ENCODE measurements at regions of chr14 and their contacts with region 1.

Region 1: GRCh38 chr14:96100161-96101029 is 61.2 kb downstream of the C14orf132 start:
- DNase-seq: peak; percentile 66 to 96
- H3K4me3 ChIP-seq: no peak overlapping the region
- H3K27ac ChIP-seq: no peak overlapping the region
- H3K4me1 ChIP-seq: peaks cover 1 to 9% (median 5%) of the 10 kb centered on the region in 4 experiments
- H3K27me3 ChIP-seq: no peaks in the 10 kb centered on the region
- CTCF ChIP-seq: peak; percentile 86 to 100 (median 93)
- EP300 ChIP-seq: no peak; a peak in 1 of 3 replicates
- POLR2A ChIP-seq: no peak
- RAD21 ChIP-seq: peak; percentile 99 to 100

Region 2: DNA sequence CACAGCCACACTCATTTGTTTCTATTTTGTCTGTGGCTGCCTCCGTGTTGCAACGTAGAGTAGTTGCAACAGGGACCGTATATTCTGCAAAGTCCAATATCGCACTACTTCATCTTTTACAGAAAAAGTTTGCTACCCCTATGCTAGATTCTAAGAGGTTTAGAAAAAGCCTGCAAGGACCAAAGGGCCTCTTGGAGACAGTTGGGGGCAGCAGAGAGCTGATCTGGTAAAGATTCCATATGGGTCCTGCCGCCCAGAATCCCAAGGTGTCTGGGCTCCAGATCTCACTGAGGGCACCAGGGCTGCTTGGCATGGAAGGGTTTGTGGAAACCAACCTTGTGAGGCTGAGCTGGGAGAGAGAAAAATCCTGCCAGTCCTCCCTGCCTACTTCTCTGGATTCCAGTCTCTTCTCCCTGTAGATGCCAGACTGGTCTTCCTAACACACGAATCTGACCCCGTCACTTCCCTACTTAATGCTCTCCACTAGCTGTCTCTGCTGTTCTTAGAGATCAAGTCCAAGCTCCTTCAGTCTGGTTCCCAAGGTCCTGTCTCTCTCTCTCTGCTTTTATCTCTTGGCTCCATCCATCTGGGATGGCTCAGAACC is 490.9 kb before region 1 on chr14:
- CTCF ChIA-PET with region 1: interaction called, 10 read pairs
- POLR2A ChIA-PET with region 1: no interaction called
- DNase-seq: peak in 1 of 2 experiments; percentile 80
- H3K4me3 ChIP-seq: no peak overlapping the region
- H3K27ac ChIP-seq: no peak overlapping the region
- H3K4me1 ChIP-seq: no peaks in the 10 kb centered on the region; a peak in 1 of 7 replicates
- H3K27me3 ChIP-seq: peaks cover 0 to 4% (median 0%) of the 10 kb centered on the region in 4 experiments; a peak in 1 of 7 replicates
- CTCF ChIP-seq: peak; percentile 47 to 83 (median 82)
- EP300 ChIP-seq: no peak
- POLR2A ChIP-seq: no peak
- RAD21 ChIP-seq: peak; percentile 87 to 90

Region 3: GRCh38 chr14:96053600-96054381 is 46.6 kb before region 1 on chr14:
- CTCF ChIA-PET with region 1: interaction called, 54 read pairs
- POLR2A ChIA-PET with region 1: no interaction called
- DNase-seq: peak in 1 of 2 experiments; percentile 35
- H3K4me3 ChIP-seq: no peak overlapping the region
- H3K27ac ChIP-seq: no peak overlapping the region
- H3K4me1 ChIP-seq: no peaks in the 10 kb centered on the region; a peak in 2 of 7 replicates
- H3K27me3 ChIP-seq: no peaks in the 10 kb centered on the region
- CTCF ChIP-seq: no peak
- EP300 ChIP-seq: no peak
- POLR2A ChIP-seq: no peak
- RAD21 ChIP-seq: no peak

Region 4: DNA sequence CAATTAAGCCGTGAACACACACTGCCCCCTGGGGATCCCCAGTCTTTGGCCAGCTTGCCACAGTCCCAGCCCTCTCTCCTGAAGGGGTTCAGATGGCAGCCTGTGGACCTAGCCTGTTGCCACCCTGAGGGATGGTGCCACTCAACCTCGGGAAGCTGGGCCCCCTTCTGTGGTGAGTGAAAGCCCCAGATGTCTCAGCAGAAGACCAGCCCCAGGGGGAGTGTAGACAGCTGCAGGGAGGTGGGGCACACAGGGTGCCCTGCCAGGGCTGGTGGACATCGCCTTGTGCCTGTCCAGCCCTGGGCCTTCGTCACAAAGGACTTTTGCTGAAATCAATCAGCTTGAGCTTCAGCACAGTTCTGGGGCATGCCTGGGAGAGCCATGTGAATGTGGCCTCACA is 28.8 kb before region 1 on chr14:
- CTCF ChIA-PET with region 1: interaction called, 15 read pairs
- POLR2A ChIA-PET with region 1: no interaction called
- DNase-seq: no peak
- H3K4me3 ChIP-seq: no peak overlapping the region
- H3K27ac ChIP-seq: no peak overlapping the region
- H3K4me1 ChIP-seq: no peaks in the 10 kb centered on the region; a peak in 1 of 7 replicates
- H3K27me3 ChIP-seq: no peaks in the 10 kb centered on the region
- CTCF ChIP-seq: no peak
- EP300 ChIP-seq: no peak
- POLR2A ChIP-seq: no peak
- RAD21 ChIP-seq: no peak

Region 5: DNA sequence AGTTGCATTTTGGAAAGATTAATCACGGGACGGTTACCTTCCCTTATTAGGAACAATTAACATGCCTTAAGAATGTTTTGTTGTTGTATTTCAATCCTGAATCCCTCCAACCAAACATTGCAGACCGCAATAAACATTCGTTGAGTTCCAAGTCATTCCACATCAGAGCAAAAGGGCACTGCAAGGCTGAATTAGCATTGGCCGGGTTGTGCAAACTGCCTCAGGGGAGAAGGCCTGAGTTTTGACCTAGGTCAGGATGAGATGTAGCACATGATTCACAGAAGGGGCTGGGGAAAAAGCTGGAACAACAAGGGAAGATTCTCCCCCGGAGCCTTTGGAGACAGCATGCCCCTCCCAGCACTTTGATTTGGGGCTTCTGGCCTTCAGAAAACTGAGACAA is 22.1 kb after region 1 on chr14:
- CTCF ChIA-PET with region 1: interaction called, 13 read pairs
- POLR2A ChIA-PET with region 1: no interaction called
- DNase-seq: no peak
- H3K4me3 ChIP-seq: no peak overlapping the region
- H3K27ac ChIP-seq: no peak overlapping the region
- H3K4me1 ChIP-seq: no peaks in the 10 kb centered on the region
- H3K27me3 ChIP-seq: peaks cover 0 to 2% (median 0%) of the 10 kb centered on the region in 4 experiments; a peak in 1 of 7 replicates
- CTCF ChIP-seq: no peak
- EP300 ChIP-seq: no peak
- POLR2A ChIP-seq: no peak
- RAD21 ChIP-seq: no peak

Region 6: GRCh38 chr14:96252999-96253539 is 152.7 kb after region 1 on chr14:
- CTCF ChIA-PET with region 1: interaction called, 23 read pairs
- POLR2A ChIA-PET with region 1: no interaction called
- DNase-seq: peak in 1 of 2 experiments; percentile 21
- H3K4me3 ChIP-seq: no peak overlapping the region
- H3K27ac ChIP-seq: no peak overlapping the region
- H3K4me1 ChIP-seq: peaks cover 0 to 4% (median 2%) of the 10 kb centered on the region in 4 experiments; a peak in 3 of 7 replicates
- H3K27me3 ChIP-seq: no peaks in the 10 kb centered on the region
- CTCF ChIP-seq: no peak
- EP300 ChIP-seq: no peak
- POLR2A ChIP-seq: no peak
- RAD21 ChIP-seq: no peak

Region 7: GRCh38 chr14:96275177-96276112 is 175.1 kb after region 1 on chr14:
- CTCF ChIA-PET with region 1: interaction called, 268 read pairs
- POLR2A ChIA-PET with region 1: no interaction called
- DNase-seq: peak in 1 of 2 experiments; percentile 92
- H3K4me3 ChIP-seq: no peak overlapping the region
- H3K27ac ChIP-seq: no peak overlapping the region
- H3K4me1 ChIP-seq: peaks cover 0 to 6% (median 2%) of the 10 kb centered on the region in 4 experiments; a peak in 2 of 7 replicates
- H3K27me3 ChIP-seq: no peaks in the 10 kb centered on the region
- CTCF ChIP-seq: peak; percentile 91 to 93 (median 93)
- EP300 ChIP-seq: no peak
- POLR2A ChIP-seq: no peak
- RAD21 ChIP-seq: peak; percentile 94

Measured in H1 (cell line).